Naive thymus-derived CD4-positive, alpha-beta T cell (primary cell): ENCODE measurements at regions of chr4 and their contacts with region 1.

Region 1: DNA sequence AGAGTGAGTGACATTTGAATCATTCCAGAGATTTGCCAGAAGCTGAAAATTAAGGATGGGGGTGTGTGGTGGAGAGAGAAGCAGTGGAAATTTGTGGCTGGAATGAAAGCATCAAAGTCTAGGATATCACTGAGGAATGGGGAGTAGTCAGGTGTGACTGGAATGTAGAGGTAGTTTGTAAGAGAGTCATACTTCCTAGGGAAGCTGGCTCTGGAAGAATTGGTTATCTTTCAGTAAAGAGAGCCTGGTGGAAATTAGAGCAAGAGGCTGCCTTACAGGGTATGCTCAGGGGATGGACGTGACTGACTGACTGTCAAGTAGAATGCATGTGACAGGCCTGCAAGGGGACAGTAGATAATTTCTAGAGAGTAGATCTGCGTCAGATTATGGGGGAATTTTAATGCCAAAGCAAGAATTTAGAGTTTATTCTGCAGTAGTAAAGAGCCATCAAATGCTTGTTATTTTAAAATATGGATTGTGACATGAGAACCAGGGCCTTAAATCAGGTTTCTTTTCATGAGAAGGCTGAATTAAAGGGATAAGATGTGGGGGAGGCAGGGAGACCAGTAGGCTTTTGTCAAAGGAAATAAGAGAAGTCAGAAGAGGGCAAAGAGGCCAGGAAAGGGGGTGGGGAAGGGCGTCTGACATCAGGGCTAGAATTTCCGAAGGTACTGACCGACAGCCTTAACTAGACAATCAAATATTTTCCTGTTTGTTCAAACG is 109.9 kb downstream of the AFF1 start:
- DNase-seq: no peak
- ATAC-seq: peak; percentile 44
- H3K4me3 ChIP-seq: no peak overlapping the region
- H3K4me3 Mint-ChIP-seq: no peak overlapping the region
- H3K27ac ChIP-seq: no peak overlapping the region
- H3K27ac Mint-ChIP-seq: no peak overlapping the region
- H3K4me1 ChIP-seq: peaks cover 0 to 8% of the 10 kb centered on the region in 2 donors
- H3K4me1 Mint-ChIP-seq: peaks cover 19 to 55% (median 29%) of the 10 kb centered on the region in 7 donors
- H3K27me3 ChIP-seq: no peaks in the 10 kb centered on the region
- H3K27me3 Mint-ChIP-seq: no peaks in the 10 kb centered on the region

Region 2: GRCh38 chr4:87026800-87027495 is 17.7 kb before region 1 on chr4:
- CTCF ChIA-PET with region 1: no interaction called
- POLR2A ChIA-PET with region 1: interaction called, 3 read pairs
- intact Hi-C with region 1: loop called in 1 of 2 experiments (anchors 2 kb)
- DNase-seq: no peak
- ATAC-seq: peak; percentile 69
- H3K4me3 ChIP-seq: no peak overlapping the region
- H3K4me3 Mint-ChIP-seq: peak overlapping the region in 4 of 10 donors; percentile 2 to 37 (median 24)
- H3K27ac ChIP-seq: no peak overlapping the region
- H3K27ac Mint-ChIP-seq: peak overlapping the region in 5 of 9 donors; percentile 2 to 81 (median 26)
- H3K4me1 ChIP-seq: peaks cover 0 to 21% of the 10 kb centered on the region in 2 donors
- H3K4me1 Mint-ChIP-seq: peaks cover 23 to 43% (median 39%) of the 10 kb centered on the region in 7 donors
- H3K27me3 ChIP-seq: no peaks in the 10 kb centered on the region
- H3K27me3 Mint-ChIP-seq: no peaks in the 10 kb centered on the region

Region 3: GRCh38 chr4:87073199-87074120 is 28.8 kb after region 1 on chr4:
- CTCF ChIA-PET with region 1: no interaction called
- POLR2A ChIA-PET with region 1: no interaction called
- intact Hi-C with region 1: loop called in 1 of 2 experiments (anchors 2 kb)
- DNase-seq: peak in 7 of 9 donors; percentile 20 to 59 (median 54)
- ATAC-seq: peak; percentile 91
- H3K4me3 ChIP-seq: peak overlapping the region; percentile 5
- H3K4me3 Mint-ChIP-seq: peak overlapping the region; percentile 75 to 87 (median 83)
- H3K27ac ChIP-seq: peak overlapping the region; percentile 6
- H3K27ac Mint-ChIP-seq: peak overlapping the region; percentile 41 to 93 (median 73)
- H3K4me1 ChIP-seq: peaks cover 6 to 9% of the 10 kb centered on the region in 2 donors
- H3K4me1 Mint-ChIP-seq: peaks cover 35 to 72% (median 66%) of the 10 kb centered on the region in 7 donors
- H3K27me3 ChIP-seq: no peaks in the 10 kb centered on the region
- H3K27me3 Mint-ChIP-seq: no peaks in the 10 kb centered on the region